Gastrocnemius medialis (tissue), 4 donors: ENCODE measurements at regions of chr16 and their contacts with region 1.

Region 1: GRCh38 chr16:23556881-23557778 is at the starts of genes EARS2 and UBFD1:
- DNase-seq: peak; percentile 99
- ATAC-seq: peak; percentile 87 to 90
- H3K4me3 ChIP-seq: peak within 1 kb of the TSS; percentile 63 to 84 (median 74)
- H3K27ac ChIP-seq: peak within 1 kb of the TSS; percentile 89 to 98 (median 96)
- H3K4me1 ChIP-seq: peaks cover 44 to 46% of the 10 kb centered on the region in 2 donors
- H3K27me3 ChIP-seq: no peaks in the 10 kb centered on the region
- CTCF ChIP-seq: peak; percentile 96 to 99 (median 98)
- POLR2A ChIP-seq: peak; percentile 84 to 88
- total RNA-seq, gene EARS2: 8.4 to 39.6 (median 19.3) TPM
- total RNA-seq, gene UBFD1: 133 to 367 (median 317) TPM

Region 2: DNA sequence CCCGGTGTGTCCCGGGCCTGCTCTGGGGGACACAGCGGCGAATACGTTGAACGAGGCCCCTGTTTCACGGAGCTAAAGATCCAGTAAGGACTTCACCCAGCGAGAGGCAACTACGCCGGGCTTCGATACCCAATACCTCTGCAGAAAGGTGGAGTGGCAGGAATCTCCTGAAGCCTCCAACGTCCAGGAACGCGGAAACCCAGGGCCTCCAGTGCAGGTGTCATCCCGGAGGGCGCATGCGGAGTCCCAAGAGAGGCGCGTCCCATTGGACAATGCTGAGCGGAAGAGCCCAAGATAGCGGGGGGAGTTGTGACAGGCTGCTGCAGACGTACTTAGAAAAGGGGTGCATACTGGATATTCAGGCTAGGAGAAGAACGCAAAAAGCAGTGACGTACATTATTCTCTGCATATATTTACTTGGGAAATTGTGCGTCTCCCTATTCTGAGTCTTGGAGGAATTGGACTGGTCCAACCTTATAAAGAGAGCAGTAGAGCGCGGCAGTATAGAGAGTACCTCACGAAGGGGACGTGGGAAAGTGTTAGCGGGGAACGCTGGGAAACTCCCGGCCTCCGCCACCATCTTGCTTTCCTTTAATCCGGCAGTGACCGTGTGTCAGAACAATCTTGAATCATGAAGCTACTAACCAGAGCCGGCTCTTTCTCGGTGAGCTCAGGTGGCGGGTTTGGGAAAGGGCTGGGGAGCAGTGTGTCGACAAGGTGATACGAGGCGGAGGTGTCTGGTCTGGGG is 1604.2 kb before region 1 on chr16 and contains the start of gene UQCRC2:
- in situ Hi-C with region 1: no loop called
- intact Hi-C with region 1: loop called (anchors 5 kb)
- DNase-seq: peak; percentile 86
- ATAC-seq: peak; percentile 98
- H3K4me3 ChIP-seq: peak within 1 kb of the TSS; percentile 73 to 99 (median 86)
- H3K27ac ChIP-seq: peak within 1 kb of the TSS; percentile 88 to 98 (median 96)
- H3K4me1 ChIP-seq: peaks cover 37 to 45% of the 10 kb centered on the region in 2 donors
- H3K27me3 ChIP-seq: no peaks in the 10 kb centered on the region
- CTCF ChIP-seq: peak in 1 of 5 experiments; percentile 18
- POLR2A ChIP-seq: peak; percentile 87 to 96
- total RNA-seq, gene UQCRC2: 204 to 335 (median 276) TPM

Region 3: DNA sequence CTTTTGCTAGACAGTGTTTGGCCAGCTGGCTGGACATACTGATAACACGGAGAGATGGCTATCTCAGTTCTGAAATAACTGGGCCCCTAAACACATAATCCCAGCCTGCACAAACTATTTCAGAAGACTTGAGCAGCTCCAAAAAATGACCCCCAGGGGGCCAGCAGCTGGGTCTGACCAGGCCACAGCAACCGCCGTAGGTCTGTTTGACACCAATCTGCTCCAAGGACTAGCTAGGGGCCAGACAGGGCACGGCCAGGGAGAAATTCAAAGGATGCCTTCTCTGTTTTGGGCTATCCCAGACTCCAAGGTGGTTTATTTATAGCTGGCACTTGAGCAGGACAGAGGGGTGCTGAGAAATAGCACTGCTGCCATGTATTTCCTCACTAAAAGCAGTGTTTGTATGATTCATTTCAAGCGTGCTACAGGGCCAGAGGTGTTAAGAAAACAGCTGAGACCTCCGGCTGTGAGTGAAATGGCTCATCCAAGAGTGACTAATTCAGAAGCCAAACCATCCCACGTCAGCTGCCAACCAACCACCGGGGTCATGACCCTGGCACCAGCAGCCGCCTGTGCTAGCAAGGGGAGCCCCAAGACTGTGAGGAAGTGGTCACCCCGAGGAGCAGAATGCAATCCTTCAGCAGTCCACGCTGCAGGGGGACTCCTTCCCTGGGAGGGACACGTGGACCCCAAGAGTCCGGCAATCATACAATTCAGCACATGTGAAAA is 52.5 kb before region 1 on chr16:
- in situ Hi-C with region 1: no loop called
- intact Hi-C with region 1: loop called (anchors 2 kb)
- DNase-seq: peak; percentile 74 to 89
- ATAC-seq: peak; percentile 95 to 96
- H3K4me3 ChIP-seq: peak overlapping the region in 1 of 4 donors; percentile 24
- H3K27ac ChIP-seq: peak overlapping the region; percentile 88 to 97 (median 90)
- H3K4me1 ChIP-seq: peaks cover 31 to 46% of the 10 kb centered on the region in 2 donors
- H3K27me3 ChIP-seq: no peaks in the 10 kb centered on the region
- CTCF ChIP-seq: peak in 1 of 5 experiments; percentile 12
- POLR2A ChIP-seq: no peak

Region 4: DNA sequence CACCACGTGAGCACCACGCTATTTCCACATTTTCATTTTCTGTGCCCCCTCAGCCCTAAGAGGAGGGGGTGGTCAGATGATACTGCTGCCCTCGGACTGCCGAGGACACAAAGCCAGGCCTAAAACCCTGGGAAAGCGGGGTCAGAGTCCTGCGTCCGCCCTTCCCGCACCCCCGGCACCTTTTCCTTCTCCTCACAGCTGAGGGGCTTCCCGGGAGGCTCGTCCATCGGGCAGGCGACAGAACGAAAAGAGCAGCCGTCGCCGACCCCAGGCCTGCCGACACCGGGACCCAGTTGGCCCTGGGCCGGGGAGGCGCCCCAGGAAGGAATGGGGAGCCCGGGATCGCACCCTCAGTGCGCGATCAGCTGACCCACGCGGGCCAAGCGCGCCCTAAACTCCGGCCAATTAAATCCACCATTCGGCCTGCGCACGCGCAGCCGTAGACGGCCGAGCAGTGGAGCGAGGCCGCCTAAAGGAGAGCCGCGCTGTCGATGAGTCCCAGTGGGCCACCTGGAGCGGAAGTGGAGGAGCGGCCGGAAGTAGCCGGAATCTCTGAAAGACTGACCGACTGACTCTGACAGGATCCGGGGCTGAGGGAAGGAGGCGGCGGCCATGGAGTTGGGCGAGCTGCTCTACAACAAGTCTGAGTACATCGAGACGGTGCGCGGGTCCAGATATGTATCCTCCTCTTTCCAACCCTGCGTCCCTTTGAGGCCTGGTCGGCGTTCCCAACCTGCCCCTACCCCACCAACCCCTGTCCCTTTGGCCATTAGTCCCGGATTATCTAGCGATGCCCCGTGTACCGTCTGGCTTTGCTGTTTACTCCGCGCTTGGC is 84.0 kb after region 1 on chr16 and contains the starts of genes DCTN5 and PALB2:
- in situ Hi-C with region 1: no loop called
- intact Hi-C with region 1: loop called (anchors 1 kb)
- DNase-seq: peak; percentile 90 to 94
- ATAC-seq: peak; percentile 99 to 100
- H3K4me3 ChIP-seq: peak within 1 kb of the TSS; percentile 89 to 100 (median 96)
- H3K27ac ChIP-seq: peak within 1 kb of the TSS; percentile 89 to 95 (median 92)
- H3K4me1 ChIP-seq: peaks cover 20 to 23% of the 10 kb centered on the region in 2 donors
- H3K27me3 ChIP-seq: no peaks in the 10 kb centered on the region
- CTCF ChIP-seq: peak in 2 of 5 experiments; percentile 11 to 13
- POLR2A ChIP-seq: peak; percentile 48 to 67
- total RNA-seq, gene DCTN5: 22.9 to 34.4 (median 24.8) TPM
- total RNA-seq, gene PALB2: 6.0 to 11.0 (median 7.3) TPM

Region 5: GRCh38 chr16:24539291-24539849 is 982.2 kb after region 1 on chr16 and contains the start of gene RBBP6:
- in situ Hi-C with region 1: no loop called
- intact Hi-C with region 1: loop called (anchors 2 kb)
- DNase-seq: peak; percentile 89 to 94
- ATAC-seq: peak; percentile 92 to 93
- H3K4me3 ChIP-seq: peak within 1 kb of the TSS; percentile 78 to 97 (median 86)
- H3K27ac ChIP-seq: peak within 1 kb of the TSS; percentile 97 to 100 (median 99)
- H3K4me1 ChIP-seq: peaks cover 26 to 36% of the 10 kb centered on the region in 2 donors
- H3K27me3 ChIP-seq: no peaks in the 10 kb centered on the region
- CTCF ChIP-seq: peak in 2 of 5 experiments; percentile 32 to 38
- POLR2A ChIP-seq: peak; percentile 100
- total RNA-seq, gene RBBP6: 33.3 to 57.1 (median 47.8) TPM